Activated B cell treated with CpG ODN at 0.5 μM for 24 hours (primary cell): ENCODE measurements at regions of chr22 and their contacts with region 1.

Region 1: DNA sequence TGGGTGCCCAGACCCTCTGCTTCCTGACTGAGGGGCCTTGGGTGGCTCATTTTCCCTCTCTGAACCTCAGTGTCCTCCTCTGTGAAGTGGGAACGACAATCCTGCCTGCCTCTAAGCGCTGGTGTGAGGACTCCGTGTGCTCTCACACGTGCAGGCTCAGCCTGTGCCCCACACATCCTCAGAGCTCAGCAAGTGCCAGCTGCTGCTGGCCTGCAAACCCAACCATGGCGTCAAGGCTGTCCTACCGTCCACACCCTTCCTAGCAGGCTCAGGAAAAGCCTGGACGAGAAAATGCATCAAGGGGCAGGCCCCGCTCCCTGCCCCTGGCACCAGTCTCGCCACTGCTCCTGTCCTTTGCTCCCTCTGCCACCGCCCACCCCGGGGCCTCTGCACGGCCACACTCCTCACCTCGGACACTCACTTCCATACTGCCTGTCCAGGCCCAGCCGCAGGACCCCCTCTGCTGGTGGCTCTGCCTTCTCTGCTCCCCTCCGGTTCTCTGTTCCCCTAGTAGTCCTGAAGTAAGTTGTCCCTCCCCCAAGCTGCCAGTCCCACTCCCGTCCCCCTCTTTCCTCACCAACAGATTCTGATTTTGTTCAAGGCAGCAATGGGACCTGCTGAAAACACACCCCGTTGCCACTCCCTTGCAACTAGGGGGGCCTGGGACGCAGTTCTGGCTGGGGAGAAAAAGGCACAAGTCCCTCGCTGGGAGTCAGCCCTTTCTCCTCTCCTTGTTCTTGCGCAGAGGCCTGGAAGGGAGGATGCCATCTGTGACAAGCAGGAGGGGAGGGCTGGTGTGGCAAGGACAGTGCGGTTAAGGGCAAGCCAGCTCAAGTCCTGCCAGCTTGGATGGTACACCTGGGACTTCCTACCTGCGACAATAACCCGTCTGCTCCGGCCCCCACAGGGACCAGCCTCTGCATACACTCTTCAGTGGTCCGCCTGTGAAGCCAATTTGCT is 62.2 kb downstream of the ARFGAP3 start:
- DNase-seq: no peak
- ATAC-seq: no peak
- H3K4me3 Mint-ChIP-seq: no peak overlapping the region
- H3K27ac Mint-ChIP-seq: no peak overlapping the region
- H3K4me1 Mint-ChIP-seq: no peaks in the 10 kb centered on the region
- H3K27me3 Mint-ChIP-seq: no peaks in the 10 kb centered on the region
- CTCF ChIP-seq: no peak

Region 2: GRCh38 chr22:42673898-42674401 is 120.9 kb before region 1 on chr22:
- CTCF ChIA-PET with region 1: no interaction called
- POLR2A ChIA-PET with region 1: interaction called, 10 read pairs
- intact Hi-C with region 1: no loop called
- DNase-seq: no peak
- ATAC-seq: no peak
- H3K4me3 Mint-ChIP-seq: no peak overlapping the region
- H3K27ac Mint-ChIP-seq: no peak overlapping the region
- H3K4me1 Mint-ChIP-seq: peaks cover 28% of the 10 kb centered on the region
- H3K27me3 Mint-ChIP-seq: no peaks in the 10 kb centered on the region
- CTCF ChIP-seq: no peak

Region 3: GRCh38 chr22:42780070-42780540 is 14.7 kb before region 1 on chr22:
- CTCF ChIA-PET with region 1: no interaction called
- POLR2A ChIA-PET with region 1: interaction called, 10 read pairs
- intact Hi-C with region 1: no loop called
- DNase-seq: no peak
- ATAC-seq: peak; percentile 80
- H3K4me3 Mint-ChIP-seq: no peak overlapping the region
- H3K27ac Mint-ChIP-seq: no peak overlapping the region
- H3K4me1 Mint-ChIP-seq: peaks cover 2% of the 10 kb centered on the region
- H3K27me3 Mint-ChIP-seq: no peaks in the 10 kb centered on the region
- CTCF ChIP-seq: peak; percentile 31